Colonic mucosa (tissue), 4 donors: ENCODE measurements at regions of chr19 and their contacts with region 1.

Region 1: DNA sequence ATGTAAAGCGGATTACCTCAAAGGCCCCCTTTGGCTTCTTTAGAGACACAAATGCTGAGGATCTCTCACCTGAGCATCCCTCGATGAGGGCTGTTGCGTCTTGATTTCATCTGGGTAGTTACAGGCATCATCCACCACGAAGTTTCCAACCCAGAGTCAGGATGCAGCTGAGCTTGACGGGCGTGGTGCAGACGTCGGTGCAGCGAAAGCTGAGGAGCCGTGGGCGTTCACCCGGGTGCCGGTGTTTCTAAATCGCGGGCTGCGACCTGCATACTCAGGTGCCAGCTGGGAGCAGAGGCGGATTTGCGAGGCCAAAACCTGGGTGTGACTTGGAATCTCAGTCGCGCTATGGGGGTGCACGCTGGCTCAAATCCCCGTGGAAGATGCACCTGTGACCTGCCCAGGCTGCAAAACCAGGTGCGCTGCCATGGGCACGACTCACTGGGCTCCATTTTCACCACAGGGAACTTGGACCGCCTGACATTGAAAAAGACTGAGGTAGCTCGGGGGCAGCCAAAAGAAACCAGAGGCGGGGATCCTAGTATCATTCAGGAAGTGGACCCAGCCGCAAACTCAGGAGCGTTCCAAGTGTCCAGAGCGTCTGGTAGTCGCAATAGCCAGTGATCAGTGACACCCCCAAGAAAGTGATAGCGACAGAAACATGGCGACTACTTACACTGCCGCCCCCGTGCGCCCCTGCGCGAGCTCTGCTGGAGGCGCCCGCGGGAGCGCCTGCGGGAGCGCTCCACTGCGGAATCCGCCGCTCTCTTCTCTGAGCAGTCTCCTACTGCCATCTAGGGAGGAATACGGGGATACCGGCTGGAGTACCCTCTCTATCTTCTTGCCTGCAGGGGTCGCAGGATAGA is 36.4 kb upstream of the IGFL4 start:
- DNase-seq: peak; percentile 68
- H3K4me3 ChIP-seq: peak overlapping the region; percentile 6
- H3K27ac ChIP-seq: no peak overlapping the region
- H3K4me1 ChIP-seq: no peaks in the 10 kb centered on the region
- H3K27me3 ChIP-seq: peaks cover 18% of the 10 kb centered on the region
- CTCF ChIP-seq: peak; percentile 74

Region 2: GRCh38 chr19:46030812-46031550 is 46.2 kb before region 1 on chr19:
- intact Hi-C with region 1: loop called (anchors 2 kb)
- DNase-seq: no peak
- H3K4me3 ChIP-seq: no peak overlapping the region
- H3K27ac ChIP-seq: no peak overlapping the region
- H3K4me1 ChIP-seq: no peaks in the 10 kb centered on the region
- H3K27me3 ChIP-seq: no peaks in the 10 kb centered on the region
- CTCF ChIP-seq: no peak

Region 3: GRCh38 chr19:46192992-46193650 is 115.9 kb after region 1 on chr19:
- intact Hi-C with region 1: loop called (anchors 2 kb)
- DNase-seq: peak; percentile 20
- H3K4me3 ChIP-seq: no peak overlapping the region
- H3K27ac ChIP-seq: no peak overlapping the region
- H3K4me1 ChIP-seq: no peaks in the 10 kb centered on the region
- H3K27me3 ChIP-seq: no peaks in the 10 kb centered on the region
- CTCF ChIP-seq: no peak

Region 4: GRCh38 chr19:46265217-46265828 is 188.1 kb after region 1 on chr19:
- intact Hi-C with region 1: loop called (anchors 5 kb)
- DNase-seq: peak; percentile 70
- H3K4me3 ChIP-seq: no peak overlapping the region
- H3K27ac ChIP-seq: no peak overlapping the region
- H3K4me1 ChIP-seq: no peaks in the 10 kb centered on the region
- H3K27me3 ChIP-seq: no peaks in the 10 kb centered on the region
- CTCF ChIP-seq: peak; percentile 77